ENCODE measurements at regions of chr3 and their contacts with region 1.

Region 1: DNA sequence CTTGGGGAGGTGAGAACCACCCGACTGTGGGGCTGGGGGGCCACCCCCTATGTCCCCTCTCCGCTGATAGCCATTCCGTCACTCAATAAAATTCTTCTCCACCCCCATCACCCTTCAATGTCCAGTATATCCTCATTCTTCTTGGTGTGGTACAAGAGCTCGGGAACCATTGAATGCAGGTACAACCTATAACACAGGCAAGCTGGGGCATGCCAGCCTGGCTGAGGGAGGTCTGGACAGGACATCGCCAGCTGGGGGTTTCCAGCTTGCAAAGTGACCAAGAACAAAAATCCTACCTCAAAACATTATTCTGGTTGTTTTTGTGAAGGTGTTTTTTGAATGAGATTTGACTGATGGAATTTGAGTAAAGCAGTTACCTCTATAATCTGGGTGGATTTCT is 19.6 kb upstream of the BDH1 start:
- DNase-seq: no peak
- ATAC-seq: peak; percentile 64
- H3K4me3 ChIP-seq: no peak overlapping the region
- H3K27ac ChIP-seq: no peak overlapping the region
- H3K4me1 ChIP-seq: no peaks in the 10 kb centered on the region
- H3K27me3 ChIP-seq: no peaks in the 10 kb centered on the region
- CTCF ChIP-seq: no peak
- EP300 ChIP-seq: no peak
- POLR2A ChIP-seq: no peak
- RAD21 ChIP-seq: no peak

Region 2: DNA sequence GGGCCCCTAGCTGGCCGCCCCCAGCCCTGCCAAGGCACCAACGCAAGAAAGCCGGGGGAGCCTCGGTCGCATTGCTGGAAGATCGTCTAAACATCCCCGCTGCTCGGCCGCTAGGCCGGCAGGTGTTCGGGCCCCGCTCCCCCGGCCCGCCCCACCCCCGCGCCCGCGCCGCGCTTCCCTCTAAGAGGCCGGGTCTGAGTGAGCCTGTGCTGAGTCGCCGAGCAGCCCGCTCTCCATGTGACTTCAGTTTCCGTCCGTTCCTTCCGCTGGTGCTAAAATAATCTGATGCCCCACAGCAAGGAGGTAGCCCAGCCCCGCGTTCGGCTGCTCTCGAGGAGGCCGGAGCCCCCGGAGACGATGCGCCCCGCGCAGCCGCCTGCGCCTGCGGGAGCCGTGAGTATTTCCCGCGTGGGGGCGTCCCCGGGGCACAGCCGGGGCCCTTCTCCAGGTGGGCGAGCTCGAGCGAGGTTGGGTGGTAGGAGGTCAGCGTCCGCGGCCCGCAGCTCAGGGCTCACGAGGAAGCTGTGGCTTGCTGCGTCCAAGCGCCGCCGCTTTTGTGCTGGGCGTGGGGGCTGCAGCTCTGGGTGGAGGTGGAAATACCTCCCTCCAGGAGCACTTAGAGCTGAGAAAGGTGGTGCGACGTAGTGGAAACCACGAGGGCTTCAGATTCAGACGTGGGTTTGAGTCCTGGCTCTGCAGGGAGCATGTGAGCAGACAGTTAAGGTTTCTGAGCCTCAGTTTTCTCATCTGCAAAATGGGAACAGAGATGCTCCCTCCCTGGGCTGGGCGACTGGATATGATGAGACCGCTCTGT is 935.7 kb before region 1 on chr3 and contains the start of gene NRROS:
- CTCF ChIA-PET with region 1: no interaction called
- POLR2A ChIA-PET with region 1: interaction called, 10 read pairs
- RAD21 ChIA-PET with region 1: no interaction called
- SMC1A ChIA-PET with region 1: no interaction called
- in situ Hi-C with region 1: no loop called
- intact Hi-C with region 1: no loop called
- DNase-seq: no peak
- ATAC-seq: peak; percentile 59
- H3K4me3 ChIP-seq: peak within 1 kb of the TSS; percentile 78
- H3K27ac ChIP-seq: peak within 1 kb of the TSS; percentile 99
- H3K4me1 ChIP-seq: peaks cover 44% of the 10 kb centered on the region
- H3K27me3 ChIP-seq: no peaks in the 10 kb centered on the region
- CTCF ChIP-seq: no peak
- EP300 ChIP-seq: 0 out of 4 replicates have a peak, but pooled peaks of 1 of the 2 experiments have one; percentile 20
- POLR2A ChIP-seq: peak; percentile 89
- RAD21 ChIP-seq: no peak
- polyA plus RNA-seq, gene NRROS: 0.35 TPM

Region 3: DNA sequence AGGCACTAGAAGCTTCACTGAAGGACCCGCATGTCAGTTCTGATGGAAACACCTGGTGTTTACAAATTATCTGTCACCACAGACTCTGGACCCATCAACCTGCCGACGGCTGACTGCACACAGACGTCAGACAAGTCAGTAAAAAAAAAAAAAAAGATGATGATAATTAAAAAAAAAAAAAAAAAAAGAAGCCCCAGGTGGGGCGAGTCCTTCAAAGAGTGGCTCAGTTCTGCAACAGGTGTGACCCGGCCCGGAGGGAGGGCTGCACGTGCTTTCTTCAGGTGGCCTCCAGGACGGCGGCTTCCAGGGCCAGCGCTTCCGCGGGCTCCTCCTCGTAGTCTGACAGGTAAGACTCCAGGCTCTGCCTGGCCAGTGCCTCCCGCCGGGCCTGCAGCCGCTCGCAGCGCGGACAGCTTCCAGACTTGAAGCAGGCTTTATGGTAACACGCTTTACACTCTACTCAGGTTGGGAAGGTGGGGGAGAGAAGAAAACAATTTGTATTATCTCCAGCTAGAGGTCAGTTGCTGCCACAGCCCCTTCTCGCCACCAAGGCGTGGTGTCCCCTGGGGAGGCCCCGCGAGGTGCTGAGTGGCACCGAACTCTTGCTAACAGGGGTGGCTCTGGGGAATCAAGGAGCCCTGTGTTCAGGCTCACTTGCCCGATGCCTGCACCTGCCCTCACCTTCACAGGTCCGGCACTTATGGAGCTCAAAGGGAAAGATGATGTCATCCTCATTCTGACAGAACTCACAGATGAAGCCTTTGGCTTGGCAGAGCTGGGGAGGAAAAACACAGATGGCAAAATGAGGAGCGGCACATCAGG is 99.6 kb after region 1 on chr3:
- CTCF ChIA-PET with region 1: no interaction called
- POLR2A ChIA-PET with region 1: interaction called, 11 read pairs
- RAD21 ChIA-PET with region 1: no interaction called
- SMC1A ChIA-PET with region 1: no interaction called
- in situ Hi-C with region 1: no loop called
- intact Hi-C with region 1: no loop called
- DNase-seq: no peak
- ATAC-seq: no peak
- H3K4me3 ChIP-seq: no peak overlapping the region
- H3K27ac ChIP-seq: no peak overlapping the region
- H3K4me1 ChIP-seq: no peaks in the 10 kb centered on the region
- H3K27me3 ChIP-seq: no peaks in the 10 kb centered on the region
- CTCF ChIP-seq: no peak
- EP300 ChIP-seq: no peak
- POLR2A ChIP-seq: no peak
- RAD21 ChIP-seq: no peak